ENCODE measurements at regions of chr17 and their contacts with region 1.

Region 1: DNA sequence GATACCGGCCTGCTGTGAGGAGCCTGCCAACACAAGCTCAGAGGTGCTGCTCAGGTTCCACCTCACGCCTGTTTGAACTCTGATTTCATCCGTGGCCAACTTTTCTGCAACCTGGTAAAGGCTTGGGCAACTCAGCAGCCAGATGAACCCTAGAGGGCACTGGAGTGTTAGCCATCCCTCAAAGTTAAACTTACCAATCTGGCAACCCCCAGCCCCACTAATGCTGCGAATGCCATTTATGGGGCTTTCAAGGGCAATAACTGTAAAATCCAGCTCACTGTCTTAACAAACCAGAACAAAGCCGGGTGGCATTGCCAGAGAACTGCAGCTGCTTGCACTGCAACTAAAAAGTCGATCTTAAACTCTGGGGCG is 105.5 kb downstream of the AXIN2 start:
- DNase-seq: no peak

Region 2: DNA sequence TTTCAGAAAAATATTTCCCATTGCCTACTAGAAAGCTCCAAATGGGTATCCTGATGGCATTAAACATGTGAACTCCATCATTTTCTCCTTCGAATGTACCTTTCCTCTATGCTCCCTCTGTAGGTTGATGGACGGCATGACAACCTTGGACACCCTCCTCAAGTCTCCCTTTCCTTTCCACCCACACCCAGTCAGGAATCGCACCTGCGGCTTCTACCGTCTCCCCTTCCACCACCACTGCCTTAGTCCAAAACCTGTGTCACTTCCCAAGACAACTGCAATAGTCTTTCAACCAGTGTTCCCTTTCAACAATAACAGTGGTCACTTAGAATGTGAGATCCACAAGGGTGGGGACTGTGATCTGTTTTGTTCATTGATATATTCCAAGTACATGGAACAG is 338.6 kb after region 1 on chr17:
- intact Hi-C with region 1: loop called (anchors 10 kb)
- DNase-seq: no peak

Region 3: DNA sequence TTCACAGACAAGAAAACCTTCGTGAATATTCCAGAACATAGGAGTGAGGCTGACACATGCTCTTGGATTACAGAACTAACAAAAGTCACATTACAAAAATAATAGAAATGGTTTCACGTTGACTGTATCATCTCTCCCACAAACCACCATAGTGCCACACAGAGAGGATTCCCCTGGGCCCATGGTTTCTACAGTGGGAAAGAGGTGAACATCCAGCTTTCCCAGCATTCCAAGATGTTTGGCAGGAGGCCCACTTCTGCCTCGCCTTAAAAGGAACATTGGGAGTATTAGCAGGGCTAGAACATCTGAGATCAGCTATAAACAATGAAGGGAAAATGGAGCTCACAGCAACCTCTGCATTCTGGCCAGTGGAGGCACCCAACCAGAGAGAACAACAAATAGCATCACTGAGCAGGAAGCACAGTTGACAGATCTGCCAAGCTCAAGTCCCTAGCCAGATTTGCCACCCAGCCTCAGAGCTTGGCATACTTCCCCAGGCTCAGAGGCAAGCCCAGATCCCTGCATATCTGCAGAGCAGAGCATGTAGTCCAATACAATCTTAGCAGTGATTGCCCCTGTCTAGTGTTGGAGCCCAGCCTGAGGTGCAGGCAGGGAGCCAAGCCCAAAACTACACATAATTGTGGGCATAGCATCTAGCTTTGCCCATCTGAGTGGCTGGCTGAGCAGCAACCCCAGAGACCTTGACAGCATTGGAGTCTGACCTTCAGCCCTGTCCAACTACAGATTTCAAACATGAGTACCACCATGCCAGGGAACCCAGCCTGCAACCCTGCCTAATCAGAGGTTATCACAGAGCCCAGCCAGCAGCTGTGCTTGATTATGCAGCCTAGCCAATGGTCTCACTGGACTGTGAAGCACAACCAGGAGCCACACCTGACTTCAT is 475.5 kb after region 1 on chr17:
- intact Hi-C with region 1: loop called (anchors 5 kb)
- DNase-seq: peak; percentile 79

Measured in cardiac septum (tissue), 1 donor.